ENCODE measurements at regions of chr13 and their contacts with region 1.

Region 1: GRCh38 chr13:29595380-29596063 is at the start of gene SLC7A1:
- DNase-seq: peak; percentile 67 to 93 (median 79)
- ATAC-seq: peak; percentile 88
- H3K4me3 ChIP-seq: peak within 1 kb of the TSS; percentile 61 to 74
- H3K4me3 Mint-ChIP-seq: peak within 1 kb of the TSS; percentile 90
- H3K27ac ChIP-seq: peak within 1 kb of the TSS; percentile 63 to 73
- H3K27ac Mint-ChIP-seq: peak within 1 kb of the TSS; percentile 85
- H3K4me1 ChIP-seq: peaks cover 15% of the 10 kb centered on the region
- H3K4me1 Mint-ChIP-seq: peaks cover 36% of the 10 kb centered on the region
- H3K27me3 ChIP-seq: no peaks in the 10 kb centered on the region
- H3K27me3 Mint-ChIP-seq: no peaks in the 10 kb centered on the region
- CTCF ChIP-seq: no peak
- total RNA-seq, gene SLC7A1: 15.2 to 18.4 TPM

Region 2: GRCh38 chr13:29902101-29902952 is 306.8 kb after region 1 on chr13:
- CTCF ChIA-PET with region 1: no interaction called
- POLR2A ChIA-PET with region 1: no interaction called
- intact Hi-C with region 1: loop called in 1 of 2 experiments (anchors 5 kb)
- DNase-seq: peak; percentile 3 to 84 (median 34)
- ATAC-seq: peak; percentile 74
- H3K4me3 ChIP-seq: peak overlapping the region; percentile 31 to 40
- H3K4me3 Mint-ChIP-seq: peak overlapping the region; percentile 81
- H3K27ac ChIP-seq: peak overlapping the region; percentile 6 to 59
- H3K27ac Mint-ChIP-seq: peak overlapping the region; percentile 84
- H3K4me1 ChIP-seq: peaks cover 17% of the 10 kb centered on the region
- H3K4me1 Mint-ChIP-seq: peaks cover 18% of the 10 kb centered on the region
- H3K27me3 ChIP-seq: no peaks in the 10 kb centered on the region
- H3K27me3 Mint-ChIP-seq: no peaks in the 10 kb centered on the region
- CTCF ChIP-seq: no peak

Region 3: DNA sequence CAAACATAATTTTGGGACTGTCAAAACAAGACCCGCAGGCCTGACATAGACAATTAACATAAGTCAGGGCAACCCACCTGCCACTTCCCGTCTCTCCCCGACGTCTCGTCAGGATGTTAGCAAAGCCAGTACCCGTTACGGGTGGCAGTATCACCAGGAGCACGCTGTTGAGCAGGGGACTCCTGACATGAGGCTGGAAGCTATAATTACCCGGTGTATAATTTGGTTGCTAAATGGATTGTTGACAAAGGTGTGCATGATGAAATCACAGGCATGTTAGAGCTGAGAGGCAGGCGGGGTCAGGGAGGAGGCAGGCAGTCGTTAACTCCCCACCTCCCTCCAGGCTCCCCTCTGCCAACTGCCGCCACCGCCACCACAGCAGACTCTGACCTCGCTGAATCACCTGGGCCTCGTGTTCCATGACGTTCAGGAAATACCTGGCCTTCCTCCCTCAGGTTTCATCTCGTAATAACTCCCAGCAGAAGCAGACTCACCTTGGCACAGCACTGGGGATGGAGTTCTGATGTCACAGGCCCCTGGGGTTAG is 513.2 kb after region 1 on chr13:
- CTCF ChIA-PET with region 1: no interaction called
- POLR2A ChIA-PET with region 1: no interaction called
- intact Hi-C with region 1: loop called (anchors 2 to 10 kb)
- DNase-seq: peak in 1 of 9 experiments; percentile 39
- ATAC-seq: no peak
- H3K4me3 ChIP-seq: no peak overlapping the region
- H3K4me3 Mint-ChIP-seq: no peak overlapping the region
- H3K27ac ChIP-seq: no peak overlapping the region
- H3K27ac Mint-ChIP-seq: no peak overlapping the region
- H3K4me1 ChIP-seq: no peaks in the 10 kb centered on the region
- H3K4me1 Mint-ChIP-seq: peaks cover 10% of the 10 kb centered on the region
- H3K27me3 ChIP-seq: no peaks in the 10 kb centered on the region
- H3K27me3 Mint-ChIP-seq: no peaks in the 10 kb centered on the region
- CTCF ChIP-seq: no peak